ENCODE measurements at regions of chr19 and their contacts with region 1.

Region 1: GRCh38 chr19:11293433-11294389 is 2.2 kb upstream of the TSPAN16 start:
- DNase-seq: peak; percentile 96
- H3K4me3 ChIP-seq: peak overlapping the region in 3 of 4 donors; percentile 22 to 34 (median 31)
- H3K27ac ChIP-seq: peak overlapping the region; percentile 40 to 65 (median 56)
- H3K4me1 ChIP-seq: peaks cover 0 to 10% (median 7%) of the 10 kb centered on the region in 4 donors
- H3K27me3 ChIP-seq: no peaks in the 10 kb centered on the region
- CTCF ChIP-seq: peak; percentile 98 to 99 (median 98)
- EP300 ChIP-seq: peak in 1 of 4 donors; percentile 3
- POLR2A ChIP-seq: no peak

Region 2: GRCh38 chr19:11339254-11340098 is 45.8 kb after region 1 on chr19 and contains the start of gene RAB3D:
- intact Hi-C with region 1: loop called (anchors 5 kb)
- DNase-seq: peak; percentile 98
- H3K4me3 ChIP-seq: peak within 1 kb of the TSS; percentile 77 to 92 (median 82)
- H3K27ac ChIP-seq: peak within 1 kb of the TSS; percentile 78 to 90 (median 87)
- H3K4me1 ChIP-seq: peaks cover 0 to 35% (median 32%) of the 10 kb centered on the region in 4 donors
- H3K27me3 ChIP-seq: no peaks in the 10 kb centered on the region
- CTCF ChIP-seq: no peak
- EP300 ChIP-seq: no peak
- POLR2A ChIP-seq: peak in 1 of 2 donors; percentile 75
- total RNA-seq, gene RAB3D: 16.0 to 27.7 (median 22.9) TPM

Region 3: GRCh38 chr19:11380653-11381534 is 87.2 kb after region 1 on chr19:
- intact Hi-C with region 1: loop called (anchors 5 kb)
- DNase-seq: peak; percentile 98
- H3K4me3 ChIP-seq: peak overlapping the region; percentile 57 to 68 (median 61)
- H3K27ac ChIP-seq: peak overlapping the region; percentile 74 to 84 (median 80)
- H3K4me1 ChIP-seq: peaks cover 0 to 72% (median 69%) of the 10 kb centered on the region in 4 donors
- H3K27me3 ChIP-seq: peaks cover 16 to 31% (median 30%) of the 10 kb centered on the region in 3 donors
- CTCF ChIP-seq: peak; percentile 76 to 85 (median 78)
- EP300 ChIP-seq: no peak
- POLR2A ChIP-seq: peak in 1 of 2 donors; percentile 67

Region 4: GRCh38 chr19:11446652-11447301 is 153.1 kb after region 1 on chr19:
- intact Hi-C with region 1: loop called (anchors 2 kb)
- DNase-seq: peak; percentile 78
- H3K4me3 ChIP-seq: no peak overlapping the region
- H3K27ac ChIP-seq: no peak overlapping the region
- H3K4me1 ChIP-seq: no peaks in the 10 kb centered on the region
- H3K27me3 ChIP-seq: peaks cover 0 to 5% (median 0%) of the 10 kb centered on the region in 3 donors
- CTCF ChIP-seq: peak; percentile 67 to 85 (median 75)
- EP300 ChIP-seq: no peak
- POLR2A ChIP-seq: no peak

Region 5: DNA sequence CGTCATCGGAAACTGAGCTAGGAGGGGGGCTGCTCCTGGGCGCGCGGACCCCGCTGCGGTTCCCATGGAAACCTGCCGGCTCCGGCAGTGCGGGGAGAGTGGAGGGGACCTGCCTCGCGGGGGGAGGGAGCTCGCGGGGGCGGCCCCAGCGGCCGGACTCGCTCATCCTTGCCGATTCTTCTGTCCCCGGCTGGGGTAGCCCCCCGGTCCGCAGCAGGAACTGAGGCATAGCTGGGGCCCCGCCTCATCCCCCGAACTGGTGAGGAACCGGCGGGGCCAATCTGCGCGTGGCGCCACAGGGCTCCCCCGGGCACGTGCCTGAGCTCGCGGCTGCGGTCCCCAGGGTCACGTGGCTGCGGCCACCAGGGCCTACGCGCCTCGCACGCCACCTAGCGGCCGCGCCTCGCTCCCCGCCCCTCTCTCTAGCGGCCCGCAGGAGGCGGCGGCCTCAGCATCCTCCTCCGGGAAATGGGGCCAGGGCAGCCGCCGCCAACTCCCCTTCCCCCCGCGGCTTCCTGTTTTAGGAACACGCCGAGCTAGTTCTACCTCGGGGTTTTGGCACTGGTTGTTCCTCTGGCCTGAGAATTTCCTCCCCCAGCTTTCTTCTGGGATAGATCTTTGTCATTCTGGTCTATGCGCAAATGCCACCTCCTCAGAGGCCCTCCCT is 188.8 kb after region 1 on chr19:
- intact Hi-C with region 1: loop called (anchors 1 kb)
- DNase-seq: peak; percentile 88
- H3K4me3 ChIP-seq: peak overlapping the region in 3 of 4 donors; percentile 16 to 40 (median 27)
- H3K27ac ChIP-seq: peak overlapping the region in 1 of 4 donors; percentile 31
- H3K4me1 ChIP-seq: peaks cover 0 to 39% (median 37%) of the 10 kb centered on the region in 4 donors
- H3K27me3 ChIP-seq: peaks cover 43 to 80% (median 58%) of the 10 kb centered on the region in 3 donors
- CTCF ChIP-seq: peak; percentile 69 to 88 (median 86)
- EP300 ChIP-seq: no peak
- POLR2A ChIP-seq: no peak

Region 6: DNA sequence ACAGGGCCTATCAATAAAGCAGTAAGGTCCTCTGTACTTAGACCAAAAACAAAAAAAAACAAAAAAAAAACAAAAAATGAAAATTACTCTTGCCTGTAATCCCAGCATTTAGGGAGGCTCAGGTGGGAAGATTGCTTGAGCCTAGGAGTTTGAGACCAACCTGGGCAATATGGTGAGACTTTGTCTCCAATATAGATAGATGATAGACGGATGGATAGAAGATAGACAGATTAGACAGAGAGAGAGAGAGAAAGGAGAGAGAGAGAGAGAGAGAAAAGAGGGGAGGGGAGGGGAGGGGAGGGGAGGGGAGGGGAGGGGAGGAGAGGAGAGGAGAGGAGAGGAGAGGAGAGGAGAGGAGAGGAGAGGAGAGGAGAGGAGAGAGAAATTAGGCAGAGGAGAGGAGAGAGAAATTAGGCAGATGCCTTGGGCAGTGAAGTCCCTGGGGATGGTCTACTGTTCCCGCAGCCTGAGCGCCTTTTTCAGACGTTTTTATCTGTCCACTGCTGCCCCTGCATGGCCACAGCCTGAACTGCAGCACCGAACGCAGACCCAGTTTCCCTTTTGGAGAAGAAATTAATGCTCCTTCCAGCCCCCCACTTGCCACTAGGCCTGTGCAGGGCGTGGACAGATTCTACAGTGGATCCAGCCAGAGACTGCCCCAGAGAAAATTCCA is 293.7 kb after region 1 on chr19:
- intact Hi-C with region 1: loop called (anchors 5 kb)
- DNase-seq: peak; percentile 86
- H3K4me3 ChIP-seq: no peak overlapping the region
- H3K27ac ChIP-seq: peak overlapping the region in 1 of 4 donors; percentile 2
- H3K4me1 ChIP-seq: no peaks in the 10 kb centered on the region
- H3K27me3 ChIP-seq: no peaks in the 10 kb centered on the region
- CTCF ChIP-seq: peak; percentile 83 to 91 (median 88)
- EP300 ChIP-seq: no peak
- POLR2A ChIP-seq: no peak